ENCODE measurements at regions of chr5 and their contacts with region 1.

Region 1: DNA sequence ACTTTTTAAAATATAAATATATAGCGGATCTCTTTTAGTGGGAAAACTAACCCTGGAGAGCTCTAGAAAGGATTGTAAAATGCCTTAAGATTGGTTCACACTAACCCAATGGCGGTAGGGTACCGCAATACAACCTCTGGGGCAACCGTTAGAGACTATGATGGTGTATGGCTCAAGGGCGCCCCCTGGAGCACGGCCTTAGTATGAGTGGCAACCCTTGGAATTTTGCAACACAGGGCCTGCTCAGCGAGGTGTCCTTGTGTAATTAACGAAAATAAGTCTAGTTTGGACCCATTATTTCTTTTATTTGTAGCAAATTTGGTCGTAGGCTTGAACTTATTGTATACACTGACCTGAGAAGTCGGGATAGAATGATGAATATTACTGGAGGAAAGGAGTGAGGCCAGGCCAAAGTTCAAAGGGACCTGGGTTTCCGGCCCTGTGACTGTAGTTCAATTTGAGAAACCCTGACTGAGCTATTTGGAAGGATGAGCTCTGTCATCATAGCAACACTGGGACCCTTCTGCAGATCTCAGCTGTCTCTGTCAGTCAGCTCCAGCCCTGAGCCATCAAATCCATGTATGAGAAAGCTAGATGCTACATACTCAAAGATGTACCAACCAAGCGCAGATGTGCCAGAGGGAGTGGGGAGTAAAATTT is 54.8 kb downstream of the CAMK4 start:
- DNase-seq: peak; percentile 95
- H3K4me3 Mint-ChIP-seq: no peak overlapping the region
- H3K27ac Mint-ChIP-seq: no peak overlapping the region
- H3K4me1 Mint-ChIP-seq: peaks cover 24% of the 10 kb centered on the region
- H3K27me3 Mint-ChIP-seq: no peaks in the 10 kb centered on the region

Region 2: DNA sequence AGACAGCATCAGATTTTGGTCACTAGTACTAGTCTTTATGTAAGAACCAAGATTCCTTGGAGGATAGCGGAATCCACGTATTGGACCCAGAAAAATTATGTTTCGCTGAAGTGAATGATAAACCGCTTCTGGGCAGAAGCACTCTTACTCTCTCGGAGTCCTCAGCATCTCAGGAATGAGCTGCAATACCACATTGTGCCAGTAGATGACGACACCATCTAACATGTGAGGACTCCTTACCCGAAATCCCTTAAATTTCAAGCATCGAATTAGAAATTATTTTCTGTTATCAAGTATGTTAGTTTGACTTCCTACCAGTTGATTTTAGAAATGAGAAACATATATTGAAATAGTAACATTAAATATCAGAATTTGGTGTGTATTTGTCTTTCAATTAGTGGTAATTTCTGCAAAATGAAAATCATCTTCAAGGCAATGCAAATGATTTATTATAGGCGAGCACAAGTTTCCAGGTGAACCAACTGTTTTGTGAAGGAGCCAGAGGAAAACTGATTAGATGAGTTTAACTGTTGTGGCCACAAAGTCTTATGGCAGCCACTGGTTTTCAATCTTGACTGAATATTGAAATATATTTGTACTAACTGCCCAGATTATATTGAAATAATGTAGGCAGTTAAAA is 120.8 kb before region 1 on chr5:
- intact Hi-C with region 1: loop called (anchors 1 kb)
- DNase-seq: peak; percentile 94
- H3K4me3 Mint-ChIP-seq: no peak overlapping the region
- H3K27ac Mint-ChIP-seq: no peak overlapping the region
- H3K4me1 Mint-ChIP-seq: peaks cover 2% of the 10 kb centered on the region
- H3K27me3 Mint-ChIP-seq: peaks cover 3% of the 10 kb centered on the region

Region 3: GRCh38 chr5:111223889-111224563 is 54.9 kb before region 1 on chr5 and contains the start of gene CAMK4:
- intact Hi-C with region 1: loop called (anchors 1 kb)
- DNase-seq: peak; percentile 94
- H3K4me3 Mint-ChIP-seq: peak within 1 kb of the TSS; percentile 97
- H3K27ac Mint-ChIP-seq: peak within 1 kb of the TSS; percentile 95
- H3K4me1 Mint-ChIP-seq: peaks cover 35% of the 10 kb centered on the region
- H3K27me3 Mint-ChIP-seq: peaks cover 2% of the 10 kb centered on the region
- total RNA-seq, gene CAMK4: 47.7 and 49.5 TPM in 2 replicates

Region 4: DNA sequence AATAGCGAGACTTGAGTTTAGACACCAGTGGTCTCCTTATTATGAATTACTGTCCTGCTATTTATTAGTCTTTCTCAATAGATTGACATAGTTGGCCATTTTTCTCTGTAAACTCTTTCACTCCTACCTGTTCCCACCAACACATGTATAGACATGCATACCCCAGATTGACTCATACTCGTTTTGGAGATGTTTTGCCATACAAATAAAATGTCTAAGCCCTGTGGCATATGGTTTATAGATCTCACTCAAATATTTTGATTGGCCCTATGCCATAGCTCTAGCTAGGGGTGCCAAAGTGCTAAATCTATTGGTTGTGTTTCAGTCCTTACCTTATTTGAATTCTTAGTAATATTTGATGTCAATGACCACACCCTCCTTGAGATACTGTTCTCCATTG is 12.5 kb before region 1 on chr5:
- intact Hi-C with region 1: no loop called
- DNase-seq: no peak
- H3K4me3 Mint-ChIP-seq: no peak overlapping the region
- H3K27ac Mint-ChIP-seq: no peak overlapping the region
- H3K4me1 Mint-ChIP-seq: peaks cover 26% of the 10 kb centered on the region
- H3K27me3 Mint-ChIP-seq: no peaks in the 10 kb centered on the region

Region 5: GRCh38 chr5:111337688-111338087 is 58.7 kb after region 1 on chr5:
- intact Hi-C with region 1: no loop called
- DNase-seq: peak; percentile 59
- H3K4me3 Mint-ChIP-seq: no peak overlapping the region
- H3K27ac Mint-ChIP-seq: peak overlapping the region; percentile 80
- H3K4me1 Mint-ChIP-seq: peaks cover 24% of the 10 kb centered on the region
- H3K27me3 Mint-ChIP-seq: no peaks in the 10 kb centered on the region